Cardiac septum (tissue), 1 donor: ENCODE measurements at regions of chr5 and their contacts with region 1.

Region 1: DNA sequence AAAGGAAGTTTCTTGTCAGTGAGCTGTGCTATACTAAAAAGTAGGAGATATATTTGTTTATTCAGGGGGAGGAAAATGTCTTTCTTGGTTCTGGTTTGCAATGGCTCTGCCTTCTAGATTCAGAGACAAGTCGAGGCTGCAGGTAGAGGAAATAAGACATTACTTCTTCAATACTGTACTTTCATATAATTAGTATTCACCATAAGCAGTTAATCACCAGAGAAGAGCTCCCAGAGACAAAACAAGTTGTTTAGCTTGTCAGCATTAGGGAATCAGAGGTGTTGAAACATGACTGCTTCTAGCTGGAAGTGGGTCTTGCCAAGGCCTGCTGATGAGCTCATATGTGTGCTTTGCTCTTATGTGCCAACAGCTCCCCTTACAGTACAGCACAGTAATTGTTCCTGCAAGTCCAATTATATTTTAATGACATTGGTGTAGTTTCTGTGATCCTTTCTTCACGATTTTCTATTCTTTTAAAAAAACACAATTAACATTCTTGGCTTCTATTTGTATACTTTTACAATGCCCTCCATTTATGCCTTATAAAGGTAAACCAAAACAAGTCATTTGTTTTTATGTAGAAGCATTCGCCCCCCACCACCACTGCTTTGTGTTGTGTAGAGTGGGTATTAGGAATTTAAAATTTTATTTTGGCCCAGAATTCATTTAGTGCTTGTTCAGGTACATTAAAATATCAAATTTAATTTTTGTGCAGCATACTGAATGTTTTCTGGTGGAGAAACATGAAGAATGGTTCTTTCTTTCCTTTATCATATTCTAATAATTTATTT is 112.2 kb downstream of the RPS23 start:
- DNase-seq: no peak

Region 2: DNA sequence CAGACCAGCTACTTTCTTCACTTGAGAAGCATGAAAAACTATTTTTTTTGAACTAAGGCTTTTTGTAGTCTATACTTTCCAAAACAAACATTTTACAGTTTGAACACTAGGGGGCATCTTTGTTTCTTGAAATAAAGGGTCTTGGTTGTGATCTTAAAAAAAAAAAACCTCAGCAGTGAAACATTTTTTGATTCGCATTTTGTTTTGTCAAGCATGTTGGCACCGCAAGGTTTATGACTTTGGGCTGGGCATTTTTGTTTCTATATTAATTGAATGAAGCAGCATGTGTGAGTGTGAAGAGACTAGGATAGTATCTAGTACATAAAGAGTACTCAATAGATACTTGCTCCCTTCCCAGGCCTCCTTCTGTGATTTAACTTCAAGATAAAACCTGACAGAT is 740.4 kb before region 1 on chr5:
- intact Hi-C with region 1: loop called (anchors 5 kb)
- DNase-seq: no peak

Region 3: DNA sequence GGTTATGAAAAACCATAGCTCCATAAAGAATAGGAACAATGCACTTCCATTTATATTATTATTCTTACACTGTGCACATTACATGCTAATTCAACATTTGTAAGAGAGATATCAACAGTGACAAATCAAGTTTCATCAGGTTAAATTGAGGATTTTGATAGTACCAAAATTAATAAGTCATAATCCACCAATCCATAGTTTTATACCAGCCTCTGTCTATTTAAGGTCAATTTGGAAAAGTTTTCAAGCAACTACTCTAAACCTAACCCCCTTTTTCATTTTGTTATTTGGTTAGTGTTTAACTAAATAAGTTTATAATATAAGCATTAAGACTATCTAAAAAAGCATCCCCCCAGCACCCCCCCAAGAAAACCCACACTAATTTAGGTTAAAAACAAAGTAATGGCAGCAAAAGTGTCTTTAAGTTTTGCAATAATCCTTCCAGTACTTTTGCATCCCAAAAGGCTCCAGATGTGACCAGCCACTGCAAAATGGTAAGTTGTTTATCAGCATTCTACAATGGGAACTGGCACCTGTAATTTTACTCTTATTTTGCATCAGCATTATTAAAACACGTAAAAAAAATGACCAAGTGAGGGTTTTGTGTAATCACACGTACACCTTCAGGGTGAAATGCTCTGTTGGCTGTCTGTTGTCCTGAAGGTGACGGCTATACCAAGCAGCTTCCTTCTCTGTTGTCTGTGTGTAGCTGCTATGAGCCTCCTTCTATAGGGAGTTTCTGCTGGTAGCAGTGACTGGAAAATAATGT is 378.3 kb before region 1 on chr5:
- intact Hi-C with region 1: loop called (anchors 10 kb)
- DNase-seq: no peak

Region 4: DNA sequence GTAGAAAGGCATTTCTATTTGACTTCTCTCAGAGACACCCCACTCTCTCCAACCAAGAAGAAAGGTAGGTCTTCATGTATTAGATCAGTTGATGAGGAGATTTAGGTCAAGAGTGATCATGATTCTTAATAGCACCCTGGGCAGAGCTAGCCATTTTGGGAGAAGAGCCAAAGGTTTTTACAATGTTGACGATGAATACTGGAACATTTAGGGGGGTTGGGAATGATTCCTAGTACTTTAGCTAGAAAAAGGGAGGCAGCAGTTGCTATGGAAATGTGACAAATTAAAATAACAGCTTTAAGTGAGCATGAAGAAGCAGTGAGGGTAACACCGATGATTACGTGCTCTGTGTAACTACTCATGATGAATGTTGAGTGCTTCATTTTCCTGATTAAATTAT is 121.7 kb after region 1 on chr5:
- intact Hi-C with region 1: no loop called
- DNase-seq: no peak